ENCODE measurements at regions of chr5 and their contacts with region 1.

Region 1: DNA sequence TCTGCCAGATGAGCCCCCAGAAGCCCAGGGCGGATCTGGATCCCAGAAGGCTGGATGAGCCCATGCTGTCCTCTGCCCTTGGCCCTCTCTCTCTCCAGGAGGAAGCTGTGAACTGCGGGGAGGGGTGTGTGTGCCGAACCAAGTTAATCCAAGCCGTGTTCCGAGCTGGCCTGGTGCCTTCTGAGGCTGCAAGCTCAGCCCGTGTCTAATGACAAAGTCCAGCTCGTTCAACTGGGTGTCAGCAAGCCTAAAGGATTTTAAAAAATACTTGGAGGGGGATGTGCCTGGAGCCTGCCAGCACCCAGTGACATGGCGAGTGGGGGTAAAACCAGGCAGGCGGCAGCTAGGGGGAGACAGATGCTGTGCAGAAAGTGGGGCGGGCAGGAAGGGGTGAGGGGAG is 8.0 kb downstream of the STC2 start:
- DNase-seq: no peak
- H3K27ac ChIP-seq: peak overlapping the region; percentile 3; the same call in 1 of the 2 replicates
- CTCF ChIP-seq: no peak

Region 2: GRCh38 chr5:172646716-172647285 is 673.5 kb before region 1 on chr5:
- CTCF ChIA-PET with region 1: no interaction called
- POLR2A ChIA-PET with region 1: no interaction called
- DNase-seq: no peak
- H3K27ac ChIP-seq: peak overlapping the region; percentile 71
- CTCF ChIP-seq: no peak

Region 3: GRCh38 chr5:173302547-173303066 is 17.7 kb before region 1 on chr5:
- CTCF ChIA-PET with region 1: interaction called, 5 read pairs
- POLR2A ChIA-PET with region 1: interaction called, 13 read pairs
- DNase-seq: peak; percentile 95
- H3K27ac ChIP-seq: peak overlapping the region; percentile 42
- CTCF ChIP-seq: no peak

Region 4: DNA sequence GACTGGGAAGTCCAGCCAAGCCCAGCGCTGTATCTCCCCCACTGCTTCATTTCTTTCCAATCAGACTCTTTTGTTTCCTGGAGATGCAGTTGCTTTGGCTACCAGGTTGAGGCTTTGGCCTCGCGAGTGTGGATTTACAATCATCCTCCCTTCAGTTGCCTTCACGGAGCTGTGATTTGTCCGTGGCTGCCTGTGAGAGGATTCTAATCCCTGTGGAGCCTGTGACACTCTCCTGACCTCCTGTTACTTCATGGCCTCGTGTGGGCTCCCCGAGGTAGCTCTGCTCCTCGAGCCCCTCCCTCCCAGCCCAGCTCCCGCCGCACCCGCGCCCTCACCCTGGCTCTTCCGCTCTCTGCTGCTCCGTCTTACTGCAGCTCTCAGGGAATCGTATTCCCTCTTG is 115.2 kb after region 1 on chr5:
- CTCF ChIA-PET with region 1: no interaction called
- POLR2A ChIA-PET with region 1: no interaction called
- DNase-seq: no peak
- H3K27ac ChIP-seq: no peak overlapping the region
- CTCF ChIP-seq: no peak

Region 5: DNA sequence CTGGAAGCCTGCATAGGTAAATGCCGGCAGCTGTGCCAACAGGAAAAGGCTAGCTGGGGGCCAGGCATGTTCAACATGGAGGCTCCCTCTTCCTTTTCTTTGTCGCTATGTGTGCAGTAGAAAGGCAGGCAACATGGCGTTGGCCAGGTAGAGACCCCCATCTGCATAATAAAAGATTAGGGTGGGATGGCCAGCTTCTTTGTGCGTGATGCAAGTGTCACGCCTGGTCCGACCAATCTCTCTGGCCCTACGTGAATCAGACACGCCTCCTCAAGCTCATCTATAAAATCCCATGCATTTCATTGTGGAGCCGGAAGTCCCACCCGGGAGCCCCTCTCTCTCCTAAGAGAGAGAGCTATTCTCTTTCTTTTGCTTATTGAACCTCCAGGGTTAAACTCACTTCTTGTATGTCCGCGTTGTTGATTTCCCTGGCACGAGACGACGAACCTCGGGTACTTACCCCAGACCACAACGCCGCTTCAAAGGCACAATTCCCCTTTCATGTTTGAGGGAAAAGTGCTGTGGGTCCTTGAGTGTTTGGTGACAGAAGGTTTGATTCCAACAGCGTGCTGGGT is 643.7 kb after region 1 on chr5:
- CTCF ChIA-PET with region 1: no interaction called
- POLR2A ChIA-PET with region 1: no interaction called
- DNase-seq: peak; percentile 30
- H3K27ac ChIP-seq: peak overlapping the region; percentile 78
- CTCF ChIP-seq: no peak